ENCODE measurements at regions of chr6 and their contacts with region 1.

Region 1: GRCh38 chr6:31441365-31442267 is 38.2 kb downstream of the MICA start:
- DNase-seq: peak; percentile 77 to 89 (median 85)
- H3K4me3 ChIP-seq: no peak overlapping the region
- H3K27ac ChIP-seq: no peak overlapping the region
- H3K4me1 ChIP-seq: no peaks in the 10 kb centered on the region
- H3K27me3 ChIP-seq: no peaks in the 10 kb centered on the region
- CTCF ChIP-seq: peak; percentile 69 to 89 (median 83)
- POLR2A ChIP-seq: no peak

Region 2: GRCh38 chr6:31393932-31394331 is 47.7 kb before region 1 on chr6:
- intact Hi-C with region 1: loop called (anchors 2 to 5 kb)
- DNase-seq: no peak
- H3K4me3 ChIP-seq: no peak overlapping the region
- H3K27ac ChIP-seq: no peak overlapping the region
- H3K4me1 ChIP-seq: peaks cover 0 to 4% of the 10 kb centered on the region in 2 donors
- H3K27me3 ChIP-seq: no peaks in the 10 kb centered on the region
- CTCF ChIP-seq: no peak
- POLR2A ChIP-seq: no peak

Region 3: DNA sequence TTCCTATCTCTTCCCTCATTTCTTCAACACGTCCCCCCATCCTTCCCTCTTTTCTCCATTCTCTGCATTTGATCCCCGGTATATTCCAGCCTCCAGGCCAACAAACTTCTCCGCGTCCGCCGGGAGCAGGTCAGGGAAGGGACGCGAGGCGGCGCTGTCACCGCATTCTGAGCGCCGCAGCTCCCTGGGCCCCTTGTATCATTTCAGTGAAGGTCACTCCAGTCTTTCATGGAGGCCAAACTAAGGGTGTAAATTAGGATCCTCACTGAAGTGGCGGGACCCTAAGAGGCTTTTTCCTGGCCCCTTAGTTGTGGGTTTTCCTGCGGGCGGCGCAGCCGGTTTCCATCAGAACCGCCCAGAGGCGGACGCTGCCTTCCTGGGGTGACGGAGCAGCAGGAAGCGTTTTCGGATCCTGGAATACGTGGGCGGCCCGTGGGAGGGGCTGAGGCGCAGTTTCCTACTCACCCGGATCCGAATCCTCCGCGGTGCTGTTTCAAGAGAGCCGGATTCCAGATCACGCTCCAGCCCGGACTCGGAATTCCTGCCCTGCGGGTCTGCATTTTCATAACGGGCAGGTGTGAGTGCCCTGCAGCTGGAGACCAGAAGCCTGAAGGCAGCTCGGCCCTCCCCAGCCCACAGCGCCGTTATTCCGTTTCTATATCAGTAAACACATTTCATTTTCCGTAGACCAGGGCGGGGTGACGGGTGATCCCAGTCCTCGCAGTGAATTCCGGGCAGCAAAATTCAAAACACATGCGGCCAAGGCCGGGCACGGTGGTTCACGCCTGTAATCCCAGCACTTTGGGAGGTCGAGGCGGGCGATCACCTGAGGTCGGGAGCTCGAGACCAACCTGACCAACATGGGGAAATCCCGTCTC is 41.8 kb before region 1 on chr6:
- intact Hi-C with region 1: loop called (anchors 2 to 5 kb)
- DNase-seq: peak; percentile 87 to 95 (median 94)
- H3K4me3 ChIP-seq: peak overlapping the region; percentile 21 to 83 (median 58)
- H3K27ac ChIP-seq: peak overlapping the region; percentile 89 to 98 (median 97)
- H3K4me1 ChIP-seq: peaks cover 23 to 36% of the 10 kb centered on the region in 2 donors
- H3K27me3 ChIP-seq: no peaks in the 10 kb centered on the region
- CTCF ChIP-seq: peak; percentile 73 to 98 (median 92)
- POLR2A ChIP-seq: peak in 1 of 2 donors; percentile 74

Measured in adrenal gland (tissue), 19 donors.